ENCODE measurements at regions of chr7 and their contacts with region 1.

Region 1: DNA sequence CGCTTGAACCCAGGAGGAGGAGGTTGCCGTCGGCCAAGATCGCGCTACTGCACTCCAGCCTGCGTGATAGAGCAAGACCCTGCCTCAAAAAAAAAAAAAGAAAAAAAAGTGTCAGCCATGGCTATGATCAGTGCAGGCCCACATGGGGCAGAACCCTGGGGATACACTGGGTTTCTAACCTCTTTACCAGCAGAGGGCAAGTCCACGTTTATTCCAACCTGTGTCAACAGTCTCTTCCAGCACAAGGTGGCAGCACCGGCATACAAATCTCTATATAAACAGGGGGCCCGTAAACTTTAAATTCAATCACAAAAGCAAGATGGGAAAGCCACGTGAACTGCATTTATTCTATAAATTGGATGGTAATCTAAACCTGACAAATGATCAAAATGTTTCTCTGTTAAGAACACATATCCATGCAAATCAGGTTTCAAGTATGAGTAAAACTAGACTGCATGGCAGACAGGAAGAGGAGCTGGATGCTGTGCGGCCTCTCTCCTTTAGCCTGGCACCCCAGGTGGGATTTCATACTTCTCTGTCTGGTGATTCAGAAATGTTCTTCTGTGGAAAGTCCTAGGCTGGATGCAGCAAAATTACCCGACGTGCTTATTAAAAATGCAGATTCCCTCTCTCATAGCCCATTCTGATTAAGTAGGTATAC is 60.0 kb upstream of the STEAP1B start:
- DNase-seq: peak in 4 of 6 donors; percentile 53 to 73 (median 60)
- ATAC-seq: peak; percentile 80 to 89 (median 86)
- H3K4me3 ChIP-seq: no peak overlapping the region
- H3K27ac ChIP-seq: no peak overlapping the region
- H3K4me1 ChIP-seq: peaks cover 9 to 21% (median 11%) of the 10 kb centered on the region in 3 donors
- H3K27me3 ChIP-seq: no peaks in the 10 kb centered on the region
- CTCF ChIP-seq: peak; percentile 49 to 76 (median 68)

Region 2: GRCh38 chr7:22316914-22317313 is 243.0 kb before region 1 on chr7:
- intact Hi-C with region 1: no loop called
- DNase-seq: no peak
- ATAC-seq: no peak
- H3K4me3 ChIP-seq: no peak overlapping the region
- H3K27ac ChIP-seq: no peak overlapping the region
- H3K4me1 ChIP-seq: peaks cover 0 to 3% (median 0%) of the 10 kb centered on the region in 3 donors
- H3K27me3 ChIP-seq: no peaks in the 10 kb centered on the region
- CTCF ChIP-seq: no peak

Region 3: DNA sequence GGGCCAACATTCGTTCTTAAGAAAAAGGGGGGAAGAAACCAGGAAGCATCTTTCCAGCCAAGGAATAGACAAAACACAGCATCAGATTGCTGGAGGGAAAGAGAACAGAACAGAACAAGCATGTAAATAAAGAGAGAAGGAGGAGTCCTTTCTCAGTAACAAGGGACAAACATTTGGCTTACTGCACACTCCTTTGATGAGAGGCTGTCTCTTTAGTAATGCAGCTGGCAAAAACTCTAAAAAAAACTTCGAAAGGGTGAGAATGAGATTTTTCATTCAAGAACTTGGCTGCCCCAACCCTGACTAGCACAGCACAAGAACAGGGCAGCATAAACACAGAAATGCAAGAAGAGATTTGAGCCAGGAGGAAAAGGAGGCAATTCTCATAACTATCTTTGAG is 128.1 kb after region 1 on chr7:
- intact Hi-C with region 1: no loop called
- DNase-seq: no peak
- ATAC-seq: no peak
- H3K4me3 ChIP-seq: no peak overlapping the region
- H3K27ac ChIP-seq: no peak overlapping the region
- H3K4me1 ChIP-seq: no peaks in the 10 kb centered on the region
- H3K27me3 ChIP-seq: no peaks in the 10 kb centered on the region
- CTCF ChIP-seq: no peak

Region 4: DNA sequence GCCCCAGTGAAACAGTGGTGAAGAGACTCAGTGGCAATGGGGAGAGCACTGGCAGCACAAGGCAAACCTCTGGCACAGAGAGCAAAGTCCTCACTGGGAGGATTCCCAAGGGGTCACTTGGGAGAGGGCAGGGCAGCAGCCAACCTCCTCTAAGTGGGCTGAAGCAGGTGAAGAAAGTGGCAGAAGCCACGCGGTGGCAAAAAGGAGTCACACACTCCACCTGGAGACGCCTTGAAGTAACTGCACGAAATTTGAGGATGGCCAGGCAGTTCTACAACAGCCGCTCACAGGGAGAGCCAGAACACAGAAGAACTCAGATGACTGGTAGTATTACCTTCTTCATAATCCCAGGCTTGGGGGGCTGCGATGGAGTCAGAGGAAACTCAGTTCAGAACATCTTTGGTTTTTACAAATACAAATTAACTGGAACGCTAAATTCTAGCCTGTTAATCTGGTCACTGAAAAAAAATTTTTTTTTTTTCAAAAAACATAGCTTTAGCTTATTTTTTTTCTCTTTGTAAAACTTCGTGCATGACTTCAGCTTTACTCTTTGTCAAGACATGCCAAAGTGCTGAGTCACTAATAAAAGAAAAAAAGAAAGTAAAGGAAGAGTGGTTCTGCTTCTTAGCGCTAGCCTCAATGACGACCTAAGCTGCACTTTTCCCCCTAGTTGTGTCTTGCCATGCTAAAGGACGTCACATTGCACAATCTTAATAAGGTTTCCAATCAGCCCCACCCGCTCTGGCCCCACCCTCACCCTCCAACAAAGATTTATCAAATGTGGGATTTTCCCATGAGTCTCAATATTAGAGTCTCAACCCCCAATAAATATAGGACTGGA is 166.6 kb after region 1 on chr7:
- intact Hi-C with region 1: loop called in 2 of 3 experiments (anchors 5 to 10 kb)
- DNase-seq: peak in 5 of 6 donors; percentile 24 to 53 (median 36)
- ATAC-seq: peak; percentile 77 to 87 (median 79)
- H3K4me3 ChIP-seq: peak overlapping the region in 2 of 4 donors; percentile 1 to 26
- H3K27ac ChIP-seq: peak overlapping the region in 1 of 4 donors; percentile 37
- H3K4me1 ChIP-seq: no peaks in the 10 kb centered on the region
- H3K27me3 ChIP-seq: no peaks in the 10 kb centered on the region
- CTCF ChIP-seq: peak in 3 of 4 donors; percentile 13 to 39 (median 15)

Region 5: GRCh38 chr7:22732556-22733126 is 172.7 kb after region 1 on chr7:
- intact Hi-C with region 1: loop called in 2 of 3 experiments (anchors 5 to 10 kb)
- DNase-seq: no peak
- ATAC-seq: peak in 2 of 4 donors; percentile 37 to 41
- H3K4me3 ChIP-seq: no peak overlapping the region
- H3K27ac ChIP-seq: no peak overlapping the region
- H3K4me1 ChIP-seq: no peaks in the 10 kb centered on the region
- H3K27me3 ChIP-seq: no peaks in the 10 kb centered on the region
- CTCF ChIP-seq: no peak

Region 6: GRCh38 chr7:23055582-23056178 is 495.7 kb after region 1 on chr7:
- intact Hi-C with region 1: loop called (anchors 10 kb)
- DNase-seq: peak in 3 of 6 donors; percentile 24 to 58 (median 31)
- ATAC-seq: peak in 3 of 4 donors; percentile 94 to 95 (median 94)
- H3K4me3 ChIP-seq: no peak overlapping the region
- H3K27ac ChIP-seq: no peak overlapping the region
- H3K4me1 ChIP-seq: no peaks in the 10 kb centered on the region
- H3K27me3 ChIP-seq: no peaks in the 10 kb centered on the region
- CTCF ChIP-seq: peak; percentile 43 to 78 (median 70)

Region 7: DNA sequence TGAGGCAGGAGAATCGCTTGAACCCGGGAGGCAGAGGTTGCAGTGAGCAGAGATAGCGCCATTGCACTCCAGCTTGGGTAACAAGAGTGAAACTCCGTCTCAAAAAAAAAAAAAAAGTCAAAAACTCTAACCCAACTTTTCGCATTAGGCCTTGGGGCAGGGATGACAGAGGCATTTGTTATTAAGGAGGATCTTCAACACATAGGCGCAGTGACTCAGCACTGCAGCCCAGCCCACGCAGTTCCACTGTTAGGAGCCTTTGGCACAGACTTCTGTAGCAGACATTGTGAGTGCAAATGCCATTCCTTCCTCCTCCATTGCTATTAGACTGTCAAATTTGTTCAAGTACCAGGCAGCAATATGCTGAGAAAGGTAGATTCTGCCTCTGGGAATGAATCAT is 502.5 kb after region 1 on chr7:
- intact Hi-C with region 1: loop called (anchors 10 kb)
- DNase-seq: no peak
- ATAC-seq: no peak
- H3K4me3 ChIP-seq: no peak overlapping the region
- H3K27ac ChIP-seq: no peak overlapping the region
- H3K4me1 ChIP-seq: no peaks in the 10 kb centered on the region
- H3K27me3 ChIP-seq: no peaks in the 10 kb centered on the region
- CTCF ChIP-seq: no peak

Measured in pancreas (tissue), 10 donors.